ENCODE measurements at regions of chr6 and their contacts with region 1.

Region 1: DNA sequence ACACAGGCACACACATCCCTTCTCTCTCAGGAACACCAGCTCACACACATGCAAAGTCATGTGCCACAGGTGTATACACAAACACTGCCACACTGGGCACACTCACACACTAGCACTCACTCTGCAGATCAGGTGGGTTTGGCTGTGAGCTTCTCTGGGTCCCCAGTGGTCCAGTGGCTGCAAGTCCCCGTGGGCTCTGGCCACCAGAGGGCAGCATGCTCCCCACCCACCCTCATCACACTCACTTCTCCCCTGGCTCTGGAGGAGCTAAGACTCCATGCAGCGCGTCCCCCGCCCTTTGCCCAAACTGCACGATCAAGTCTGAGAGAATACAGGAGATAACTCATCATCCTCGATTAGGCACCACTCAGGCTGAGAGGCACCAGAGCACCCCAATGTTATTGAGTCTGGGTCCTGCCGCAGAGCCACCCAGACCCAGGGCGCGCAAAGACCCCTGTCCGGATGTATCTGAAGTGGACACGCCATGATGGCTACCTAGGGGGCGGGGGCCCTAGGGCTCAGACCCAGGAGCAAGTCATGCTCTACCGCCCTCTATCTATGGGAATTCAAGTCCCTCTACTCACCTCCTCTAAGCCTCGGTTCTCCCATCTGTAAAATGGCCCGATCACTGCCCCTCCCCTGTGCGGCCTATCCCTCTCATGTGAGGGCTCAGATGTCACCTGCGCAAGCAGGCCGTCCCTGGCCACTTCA is 90.5 kb downstream of the GRM4 start:
- DNase-seq: peak; percentile 82
- ATAC-seq: peak; percentile 57
- H3K4me3 Mint-ChIP-seq: no peak overlapping the region
- H3K27ac Mint-ChIP-seq: no peak overlapping the region
- H3K4me1 Mint-ChIP-seq: peaks cover 50% of the 10 kb centered on the region
- H3K27me3 Mint-ChIP-seq: no peaks in the 10 kb centered on the region; the same call in 1 of the 2 replicates
- CTCF ChIP-seq: peak; percentile 68

Region 2: GRCh38 chr6:33958526-33959333 is 96.6 kb before region 1 on chr6:
- CTCF ChIA-PET with region 1: interaction called, 30 read pairs
- POLR2A ChIA-PET with region 1: no interaction called
- DNase-seq: peak; percentile 75
- ATAC-seq: peak; percentile 74
- H3K4me3 Mint-ChIP-seq: no peak overlapping the region
- H3K27ac Mint-ChIP-seq: no peak overlapping the region
- H3K4me1 Mint-ChIP-seq: peaks cover 24% of the 10 kb centered on the region
- H3K27me3 Mint-ChIP-seq: peaks cover 3% of the 10 kb centered on the region
- CTCF ChIP-seq: peak; percentile 57

Region 3: GRCh38 chr6:34027445-34027936 is 27.9 kb before region 1 on chr6:
- CTCF ChIA-PET with region 1: interaction called, 50 read pairs
- POLR2A ChIA-PET with region 1: no interaction called
- DNase-seq: peak; percentile 85
- ATAC-seq: peak; percentile 85
- H3K4me3 Mint-ChIP-seq: no peak overlapping the region
- H3K27ac Mint-ChIP-seq: no peak overlapping the region
- H3K4me1 Mint-ChIP-seq: no peaks in the 10 kb centered on the region
- H3K27me3 Mint-ChIP-seq: no peaks in the 10 kb centered on the region
- CTCF ChIP-seq: peak; percentile 86

Region 4: GRCh38 chr6:34074064-34074742 is 18.8 kb after region 1 on chr6:
- CTCF ChIA-PET with region 1: interaction called, 57 read pairs
- POLR2A ChIA-PET with region 1: no interaction called
- DNase-seq: no peak
- ATAC-seq: peak; percentile 91
- H3K4me3 Mint-ChIP-seq: no peak overlapping the region
- H3K27ac Mint-ChIP-seq: no peak overlapping the region
- H3K4me1 Mint-ChIP-seq: peaks cover 28% of the 10 kb centered on the region
- H3K27me3 Mint-ChIP-seq: no peaks in the 10 kb centered on the region
- CTCF ChIP-seq: no peak

Region 5: DNA sequence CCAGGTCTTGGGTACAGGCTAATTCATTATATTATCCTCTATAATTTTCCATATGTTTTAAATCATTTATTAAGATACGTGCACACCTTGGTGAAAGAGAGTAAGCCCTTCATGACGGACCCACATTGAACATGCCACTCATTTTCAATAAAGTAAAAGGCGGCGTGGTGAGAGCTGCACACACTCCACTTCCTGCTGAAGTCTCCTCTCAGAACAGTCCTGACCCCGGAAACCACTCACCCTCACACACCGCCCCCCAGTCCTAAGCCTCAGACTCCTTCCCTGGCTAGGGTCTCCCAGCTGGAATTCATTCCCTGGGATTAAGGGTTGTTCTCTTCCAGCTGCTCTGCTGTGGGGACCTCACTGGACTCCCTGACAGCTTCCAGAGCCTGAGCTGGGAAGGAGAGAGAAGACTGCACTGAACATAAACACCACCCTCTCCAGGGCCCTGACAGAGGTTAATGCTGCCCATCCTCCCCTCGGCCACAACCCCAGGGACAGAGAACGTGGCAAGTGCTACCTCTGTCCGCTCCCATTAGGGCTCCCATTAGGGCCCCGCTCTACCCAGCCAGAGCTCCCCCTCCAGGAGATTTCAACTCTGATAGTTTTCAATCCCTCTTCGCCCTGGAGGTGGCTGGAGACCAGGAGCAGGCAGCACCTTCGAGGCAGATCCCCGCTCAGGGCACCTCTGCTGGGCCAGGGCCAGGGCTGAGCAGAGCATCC is 65.7 kb after region 1 on chr6:
- CTCF ChIA-PET with region 1: interaction called, 12 read pairs
- POLR2A ChIA-PET with region 1: no interaction called
- DNase-seq: peak; percentile 37
- ATAC-seq: peak; percentile 75
- H3K4me3 Mint-ChIP-seq: no peak overlapping the region
- H3K27ac Mint-ChIP-seq: no peak overlapping the region; the same call in 1 of the 2 replicates
- H3K4me1 Mint-ChIP-seq: peaks cover 21% of the 10 kb centered on the region
- H3K27me3 Mint-ChIP-seq: no peaks in the 10 kb centered on the region; the same call in 1 of the 2 replicates
- CTCF ChIP-seq: no peak

Region 6: GRCh38 chr6:34154668-34155447 is 99.5 kb after region 1 on chr6:
- CTCF ChIA-PET with region 1: interaction called, 187 read pairs
- POLR2A ChIA-PET with region 1: no interaction called
- DNase-seq: peak; percentile 87
- ATAC-seq: peak; percentile 78
- H3K4me3 Mint-ChIP-seq: peak overlapping the region; percentile 64
- H3K27ac Mint-ChIP-seq: no peak overlapping the region
- H3K4me1 Mint-ChIP-seq: peaks cover 40% of the 10 kb centered on the region
- H3K27me3 Mint-ChIP-seq: peaks cover 64% of the 10 kb centered on the region
- CTCF ChIP-seq: peak; percentile 97

Measured in WTC11 (cell line).